Gastrocnemius medialis (tissue), 4 donors: ENCODE measurements at regions of chr3 and their contacts with region 1.

Region 1: GRCh38 chr3:120214161-120214560 is 70.9 kb downstream of the GPR156 start:
- DNase-seq: no peak
- ATAC-seq: no peak
- H3K4me3 ChIP-seq: no peak overlapping the region
- H3K27ac ChIP-seq: peak overlapping the region in 1 of 4 donors; percentile 56
- H3K4me1 ChIP-seq: peaks cover 10 to 17% of the 10 kb centered on the region in 2 donors
- H3K27me3 ChIP-seq: no peaks in the 10 kb centered on the region
- CTCF ChIP-seq: no peak
- POLR2A ChIP-seq: no peak

Region 2: GRCh38 chr3:120088622-120089021 is 125.5 kb before region 1 on chr3:
- in situ Hi-C with region 1: loop called in 1 of 4 experiments (anchors 10 kb)
- intact Hi-C with region 1: loop called (anchors 1 kb)
- DNase-seq: no peak
- ATAC-seq: no peak
- H3K4me3 ChIP-seq: no peak overlapping the region
- H3K27ac ChIP-seq: no peak overlapping the region
- H3K4me1 ChIP-seq: peaks cover 42 to 47% of the 10 kb centered on the region in 2 donors
- H3K27me3 ChIP-seq: no peaks in the 10 kb centered on the region
- CTCF ChIP-seq: no peak
- POLR2A ChIP-seq: no peak

Region 3: GRCh38 chr3:120348981-120349818 is 135.0 kb after region 1 on chr3 and contains the start of gene LRRC58:
- in situ Hi-C with region 1: no loop called
- intact Hi-C with region 1: no loop called
- DNase-seq: peak; percentile 82 to 93
- ATAC-seq: peak; percentile 88 to 93
- H3K4me3 ChIP-seq: peak within 1 kb of the TSS; percentile 77 to 95 (median 85)
- H3K27ac ChIP-seq: peak within 1 kb of the TSS; percentile 88 to 93 (median 90)
- H3K4me1 ChIP-seq: peaks cover 20 to 43% of the 10 kb centered on the region in 2 donors
- H3K27me3 ChIP-seq: no peaks in the 10 kb centered on the region
- CTCF ChIP-seq: peak in 4 of 5 experiments; percentile 14 to 48 (median 28)
- POLR2A ChIP-seq: peak; percentile 92 to 95
- total RNA-seq, gene LRRC58: 8.4 to 15.2 (median 13.6) TPM